Left ventricle myocardium inferior (tissue), 1 donor: ENCODE measurements at regions of chr4 and their contacts with region 1.

Region 1: DNA sequence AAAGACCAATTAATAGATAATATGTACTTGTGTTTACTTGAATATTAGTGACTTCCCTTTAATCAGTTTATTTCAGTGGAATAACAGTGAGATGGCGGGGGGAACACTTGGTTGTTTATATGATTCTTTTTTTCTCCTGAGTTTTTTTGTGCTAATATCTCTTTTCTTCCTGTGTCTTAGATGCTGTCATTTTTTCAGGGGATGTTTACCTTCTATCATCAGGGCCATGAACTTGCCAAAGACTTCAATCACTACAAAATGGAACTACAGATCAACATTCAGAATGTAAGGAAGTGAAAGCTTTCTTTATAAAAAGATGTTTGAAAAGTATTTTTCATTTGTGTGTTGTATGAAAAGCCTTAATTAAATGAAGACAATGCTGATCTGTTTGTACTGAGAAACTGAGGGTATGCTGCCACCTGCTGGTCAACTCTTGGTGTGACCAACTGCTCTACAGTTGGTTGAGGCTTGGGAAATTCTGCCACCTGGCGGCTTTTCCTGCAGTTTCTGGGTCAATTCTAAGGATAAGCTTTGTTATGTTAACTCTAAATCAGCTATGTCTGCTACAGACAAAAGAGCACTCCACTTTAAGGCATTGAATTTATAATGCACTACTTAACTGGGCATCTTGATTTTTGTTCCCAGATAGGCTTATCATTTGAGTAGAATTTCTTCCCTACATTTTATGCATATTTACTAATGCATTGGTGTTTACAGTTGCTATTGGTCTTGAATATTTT is 134.8 kb downstream of the ARHGAP10 start:
- DNase-seq: peak; percentile 89
- H3K4me3 ChIP-seq: no peak overlapping the region
- H3K27ac ChIP-seq: peak overlapping the region; percentile 59
- H3K4me1 ChIP-seq: peaks cover 54% of the 10 kb centered on the region
- H3K27me3 ChIP-seq: no peaks in the 10 kb centered on the region
- CTCF ChIP-seq: peak; percentile 100

Region 2: DNA sequence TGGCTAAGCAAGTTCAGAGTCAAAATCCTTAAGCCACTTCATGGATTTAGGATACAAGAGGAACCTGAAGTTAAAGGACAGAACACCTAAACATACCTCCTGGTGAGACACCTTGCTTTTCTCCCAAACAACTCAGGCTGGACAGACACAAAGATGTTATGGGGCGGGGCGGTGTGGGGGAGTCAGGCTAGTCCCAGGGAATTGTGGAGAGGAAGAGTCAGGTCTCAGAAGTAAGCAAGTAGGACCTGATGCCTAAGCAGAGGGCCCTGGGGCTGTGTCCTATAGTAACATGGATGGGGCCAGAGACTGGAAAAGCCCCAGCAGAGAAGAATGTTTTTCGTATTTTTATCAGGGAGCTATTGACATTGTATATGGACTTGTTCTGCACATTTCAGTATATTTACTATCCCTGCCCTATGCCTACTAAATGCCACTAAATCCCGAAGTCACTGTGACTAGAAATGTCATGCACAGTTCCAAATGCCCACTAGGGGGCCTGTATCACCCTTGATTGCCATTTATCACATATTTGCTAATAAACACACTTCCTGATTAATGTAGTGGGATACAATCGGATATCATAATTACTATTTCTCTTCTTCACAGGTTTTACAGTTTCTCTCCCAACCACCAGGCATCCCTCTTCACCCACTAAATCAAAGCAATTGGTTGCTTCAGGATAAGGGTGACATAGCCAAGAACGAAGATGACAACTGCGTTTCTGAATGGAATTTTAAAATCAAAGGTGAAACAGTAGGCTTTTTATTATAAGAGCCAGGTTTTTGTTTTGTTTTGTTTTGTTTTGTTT is 158.6 kb before region 1 on chr4:
- intact Hi-C with region 1: loop called (anchors 1 kb)
- DNase-seq: no peak
- H3K4me3 ChIP-seq: peak overlapping the region; percentile 41
- H3K27ac ChIP-seq: no peak overlapping the region
- H3K4me1 ChIP-seq: peaks cover 4% of the 10 kb centered on the region
- H3K27me3 ChIP-seq: no peaks in the 10 kb centered on the region
- CTCF ChIP-seq: peak; percentile 88